IMR-90 (cell line): ENCODE measurements at regions of chr3 and their contacts with region 1.

Region 1: GRCh38 chr3:88003115-88003755 is 55.6 kb downstream of the CGGBP1 start:
- DNase-seq: peak; percentile 49
- ATAC-seq: peak; percentile 53
- H3K4me3 ChIP-seq: no peak overlapping the region
- H3K27ac ChIP-seq: no peak overlapping the region
- H3K4me1 ChIP-seq: no peaks in the 10 kb centered on the region
- H3K27me3 ChIP-seq: peaks cover 5% of the 10 kb centered on the region
- CTCF ChIP-seq: peak; percentile 75
- POLR2A ChIP-seq: no peak
- RAD21 ChIP-seq: peak; percentile 68

Region 2: DNA sequence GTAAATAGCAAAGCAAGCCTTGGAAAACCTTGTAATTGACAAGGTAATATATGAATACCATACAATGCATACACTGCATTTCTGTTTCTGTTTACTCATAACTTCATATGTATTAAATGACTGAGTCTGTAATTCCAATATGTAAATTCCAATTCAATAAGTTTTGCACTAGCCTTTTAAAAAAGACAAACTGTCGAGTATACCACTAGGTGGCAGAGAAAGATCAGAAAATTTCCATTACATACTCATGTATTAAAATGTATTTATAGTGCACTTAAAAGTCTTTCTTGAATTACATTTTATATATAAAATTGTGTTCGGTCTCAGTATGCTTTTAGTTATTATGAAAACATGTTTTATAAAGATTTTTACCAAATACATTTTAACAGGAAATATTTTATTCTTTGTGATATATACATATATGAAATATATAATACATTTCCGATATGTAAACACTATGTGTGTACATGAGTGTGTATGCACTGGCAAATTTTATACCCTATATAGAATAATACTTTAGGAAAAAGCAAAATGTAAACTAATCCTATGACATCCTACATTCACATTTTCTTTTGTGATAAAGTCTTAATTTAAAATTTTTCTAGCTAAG is 1229.0 kb before region 1 on chr3:
- CTCF ChIA-PET with region 1: no interaction called
- POLR2A ChIA-PET with region 1: no interaction called
- dilution Hi-C with region 1: no loop called
- in situ Hi-C with region 1: no loop called
- intact Hi-C with region 1: loop called (anchors 2 kb)
- DNase-seq: peak; percentile 58
- ATAC-seq: peak; percentile 75
- H3K4me3 ChIP-seq: no peak overlapping the region
- H3K27ac ChIP-seq: no peak overlapping the region
- H3K4me1 ChIP-seq: no peaks in the 10 kb centered on the region
- H3K27me3 ChIP-seq: no peaks in the 10 kb centered on the region; the same call in 1 of the 2 replicates
- CTCF ChIP-seq: peak; percentile 65
- POLR2A ChIP-seq: no peak
- RAD21 ChIP-seq: peak; percentile 72

Region 3: GRCh38 chr3:87298111-87298718 is 705.0 kb before region 1 on chr3:
- CTCF ChIA-PET with region 1: interaction called, 5 read pairs
- POLR2A ChIA-PET with region 1: no interaction called
- dilution Hi-C with region 1: no loop called
- in situ Hi-C with region 1: no loop called
- intact Hi-C with region 1: loop called (anchors 1 kb)
- DNase-seq: peak; percentile 32
- ATAC-seq: peak; percentile 71
- H3K4me3 ChIP-seq: no peak overlapping the region
- H3K27ac ChIP-seq: no peak overlapping the region
- H3K4me1 ChIP-seq: no peaks in the 10 kb centered on the region
- H3K27me3 ChIP-seq: no peaks in the 10 kb centered on the region; the same call in 1 of the 2 replicates
- CTCF ChIP-seq: peak; percentile 66
- POLR2A ChIP-seq: no peak
- RAD21 ChIP-seq: peak; percentile 66

Region 4: DNA sequence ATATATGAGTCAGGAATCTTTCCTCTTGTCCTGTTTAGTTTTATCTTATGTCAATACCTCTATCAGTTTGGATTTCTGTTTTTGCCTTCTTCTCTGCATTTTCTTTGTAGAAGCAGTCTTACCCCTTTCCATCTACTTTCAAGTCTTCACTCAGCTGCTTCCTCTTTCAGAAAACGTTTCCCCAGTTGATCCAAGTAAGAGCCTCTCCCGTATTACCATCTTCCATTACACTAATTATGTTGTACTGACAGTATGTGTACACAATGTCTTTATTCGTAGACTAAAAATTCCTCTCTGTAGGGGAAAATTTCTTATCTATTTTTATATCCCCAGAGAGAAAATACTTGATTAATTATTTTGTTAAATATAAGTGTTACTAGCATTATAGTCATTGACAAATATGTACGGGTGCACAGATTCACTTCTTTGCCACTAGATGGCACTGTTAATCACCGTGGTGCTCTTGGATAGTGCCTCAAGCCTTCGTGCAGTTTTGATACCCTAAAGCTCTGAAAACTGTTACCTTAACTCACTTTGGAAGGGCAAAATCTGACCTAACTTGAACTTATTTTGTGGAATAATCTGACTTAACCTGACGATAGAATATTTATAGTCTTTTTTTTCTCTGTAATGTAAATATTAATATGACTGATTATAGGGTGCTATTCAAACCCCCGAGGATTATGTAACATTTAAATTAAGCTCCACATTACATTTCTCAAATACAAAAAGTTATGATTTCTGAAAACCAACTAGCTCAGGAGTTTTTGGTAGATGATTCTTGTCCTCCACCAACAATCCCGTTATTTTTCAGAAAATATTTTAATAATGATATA is 652.7 kb before region 1 on chr3:
- CTCF ChIA-PET with region 1: interaction called, 6 read pairs
- POLR2A ChIA-PET with region 1: no interaction called
- dilution Hi-C with region 1: no loop called
- in situ Hi-C with region 1: no loop called
- intact Hi-C with region 1: loop called (anchors 1 kb)
- DNase-seq: peak; percentile 47
- ATAC-seq: peak; percentile 90
- H3K4me3 ChIP-seq: no peak overlapping the region
- H3K27ac ChIP-seq: no peak overlapping the region
- H3K4me1 ChIP-seq: no peaks in the 10 kb centered on the region
- H3K27me3 ChIP-seq: no peaks in the 10 kb centered on the region
- CTCF ChIP-seq: peak; percentile 77
- POLR2A ChIP-seq: no peak
- RAD21 ChIP-seq: peak; percentile 68

Region 5: GRCh38 chr3:88113311-88114162 is 110.3 kb after region 1 on chr3:
- CTCF ChIA-PET with region 1: no interaction called
- POLR2A ChIA-PET with region 1: no interaction called
- dilution Hi-C with region 1: no loop called
- in situ Hi-C with region 1: no loop called
- intact Hi-C with region 1: loop called (anchors 5 kb)
- DNase-seq: peak; percentile 70
- ATAC-seq: peak; percentile 96
- H3K4me3 ChIP-seq: no peak overlapping the region
- H3K27ac ChIP-seq: no peak overlapping the region
- H3K4me1 ChIP-seq: no peaks in the 10 kb centered on the region
- H3K27me3 ChIP-seq: no peaks in the 10 kb centered on the region
- CTCF ChIP-seq: peak; percentile 74
- POLR2A ChIP-seq: no peak
- RAD21 ChIP-seq: peak; percentile 69

Region 6: DNA sequence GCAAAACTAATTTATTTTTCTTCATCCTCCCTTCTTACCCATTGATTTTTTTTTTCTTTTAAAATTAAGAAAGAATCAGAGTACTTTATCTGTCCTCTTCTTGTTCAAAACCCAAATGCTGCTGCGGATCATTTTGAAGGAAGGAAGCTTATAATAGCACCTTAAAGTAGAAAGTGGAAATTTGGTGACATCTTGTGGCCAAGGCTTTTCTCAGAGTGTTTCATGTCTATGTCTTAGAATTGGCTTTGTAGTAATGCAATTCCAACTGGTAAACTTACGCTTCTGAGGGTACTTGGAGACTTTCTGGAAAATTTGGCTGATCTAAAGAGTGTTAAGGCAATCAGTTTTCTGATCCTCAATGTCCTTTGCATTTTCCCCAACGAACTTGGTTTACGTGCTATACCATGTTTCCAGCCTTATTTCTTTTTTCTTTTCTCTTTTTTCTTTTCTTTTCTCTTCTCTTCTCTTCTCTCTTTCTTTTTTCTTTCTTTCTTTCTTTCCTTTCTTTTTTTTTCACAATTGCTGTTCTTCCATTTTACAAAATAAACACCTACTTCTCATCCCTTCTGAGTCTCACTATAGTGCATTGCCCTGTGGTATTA is 177.3 kb after region 1 on chr3:
- CTCF ChIA-PET with region 1: no interaction called
- POLR2A ChIA-PET with region 1: no interaction called
- dilution Hi-C with region 1: no loop called
- in situ Hi-C with region 1: no loop called
- intact Hi-C with region 1: loop called (anchors 5 kb)
- DNase-seq: peak; percentile 58
- ATAC-seq: peak; percentile 75
- H3K4me3 ChIP-seq: no peak overlapping the region
- H3K27ac ChIP-seq: no peak overlapping the region
- H3K4me1 ChIP-seq: no peaks in the 10 kb centered on the region; the same call in 1 of the 2 replicates
- H3K27me3 ChIP-seq: no peaks in the 10 kb centered on the region
- CTCF ChIP-seq: peak; percentile 60
- POLR2A ChIP-seq: no peak
- RAD21 ChIP-seq: peak; percentile 71